Activated CD8-positive, alpha-beta memory T cell treated with anti-CD3 and anti-CD28 coated beads, Interleukin-2, amount 10 ng/mL, durations not matched to agents 7 days and 5 days (primary cell): ENCODE measurements at regions of chr5 and their contacts with region 1.

Region 1: DNA sequence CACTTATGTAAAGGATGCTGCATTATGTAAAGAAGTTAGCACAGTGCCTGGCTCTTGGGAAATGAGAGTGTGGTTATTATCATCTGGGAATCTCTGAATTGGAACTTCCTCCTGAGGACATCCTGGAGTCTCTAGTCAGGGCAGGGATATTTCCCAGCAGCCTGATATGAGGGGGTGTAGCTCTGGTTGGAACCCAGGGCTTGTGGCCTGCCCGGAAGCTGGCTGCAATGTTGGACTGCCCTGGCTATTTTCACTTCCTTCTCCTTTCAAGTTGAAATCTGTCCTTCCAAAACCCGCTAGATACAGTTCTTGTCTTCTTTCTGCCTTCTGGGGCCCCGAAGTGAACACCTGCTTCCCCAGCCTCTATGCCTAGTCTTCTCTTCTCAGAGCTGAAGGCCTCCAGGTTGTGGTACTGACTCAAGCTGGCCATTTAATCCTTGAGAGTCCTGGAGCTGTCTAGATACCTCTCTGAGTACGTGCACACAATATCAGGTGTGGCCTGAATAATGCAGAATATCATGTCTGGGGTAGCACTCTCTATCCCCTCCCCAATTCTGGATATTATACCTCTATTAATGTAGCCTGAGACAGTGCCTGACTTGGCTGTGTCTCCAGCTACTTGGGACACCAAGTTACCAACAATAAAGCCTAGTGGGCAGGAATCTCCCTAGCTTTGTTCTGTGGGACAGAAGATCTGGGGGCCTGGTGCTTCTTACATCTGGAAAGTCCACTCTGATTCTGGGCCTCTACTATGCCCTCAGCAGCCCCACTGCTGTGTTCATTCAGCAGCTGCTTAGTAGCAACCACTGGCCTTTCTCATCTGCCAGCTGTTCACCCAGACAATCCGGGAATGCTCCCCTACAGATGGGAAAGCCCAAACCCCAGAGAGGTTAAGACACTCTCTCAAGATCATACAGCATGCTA is 45.0 kb downstream of the SLC6A7 start:
- DNase-seq: no peak
- ATAC-seq: no peak
- H3K4me3 Mint-ChIP-seq: no peak overlapping the region
- H3K27ac Mint-ChIP-seq: no peak overlapping the region
- H3K4me1 Mint-ChIP-seq: no peaks in the 10 kb centered on the region
- H3K27me3 Mint-ChIP-seq: peaks cover 4% of the 10 kb centered on the region

Region 2: DNA sequence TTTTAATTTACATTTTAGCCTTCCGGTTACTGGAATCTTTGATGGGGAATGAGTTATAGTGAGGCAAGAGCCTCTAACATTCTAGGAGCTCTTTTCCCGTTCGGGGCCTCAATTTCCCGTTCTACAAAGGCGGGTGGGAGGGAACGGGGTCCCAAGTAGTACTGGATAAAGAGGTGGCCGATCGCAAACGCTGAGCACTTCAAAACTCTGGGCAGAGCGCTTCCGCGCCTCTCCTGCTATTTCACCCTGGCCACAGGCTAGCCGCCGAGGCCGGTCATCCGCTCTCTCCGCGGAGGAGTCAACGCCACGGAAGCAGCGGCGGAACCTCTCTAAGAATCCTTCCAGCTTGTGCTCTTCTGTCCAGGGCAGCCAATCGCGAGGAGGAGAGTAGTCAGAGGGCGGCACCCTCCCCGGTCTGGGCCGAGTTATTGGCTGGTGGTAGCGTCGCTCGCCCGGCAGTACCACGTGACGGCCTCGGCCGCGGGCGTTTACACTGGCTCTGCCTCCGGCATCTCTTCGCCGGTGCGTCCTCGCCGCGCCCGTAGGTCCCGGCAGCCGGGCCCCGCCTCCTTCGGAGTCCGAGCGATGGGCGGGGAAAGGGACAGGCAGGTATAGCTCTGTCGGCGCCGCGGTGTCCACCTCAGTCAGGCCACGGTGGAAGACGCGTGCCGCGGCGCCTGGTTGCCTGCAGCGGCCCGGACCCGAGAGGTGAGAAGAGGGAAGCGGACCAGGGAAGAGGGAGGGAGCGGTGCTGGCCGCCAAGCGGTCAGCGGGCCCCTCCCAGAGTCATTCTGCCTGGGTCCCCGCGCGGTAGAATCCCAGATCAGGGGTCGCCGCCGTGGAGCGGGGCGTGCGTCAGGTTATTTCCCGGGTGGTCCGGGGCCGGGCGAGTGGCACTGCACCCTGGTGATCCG is 274.3 kb before region 1 on chr5 and contains the start of gene SLC26A2:
- CTCF ChIA-PET with region 1: no interaction called
- DNase-seq: peak; percentile 98
- ATAC-seq: peak; percentile 99
- H3K4me3 Mint-ChIP-seq: peak within 1 kb of the TSS; percentile 85
- H3K27ac Mint-ChIP-seq: peak within 1 kb of the TSS; percentile 94
- H3K4me1 Mint-ChIP-seq: peaks cover 31% of the 10 kb centered on the region
- H3K27me3 Mint-ChIP-seq: no peaks in the 10 kb centered on the region
- total RNA-seq, gene SLC26A2: 6.2 to 8.4 TPM

Region 3: GRCh38 chr5:150217873-150218692 is 16.8 kb before region 1 on chr5:
- CTCF ChIA-PET with region 1: interaction called, 11 read pairs
- DNase-seq: peak; percentile 90
- ATAC-seq: peak; percentile 98
- H3K4me3 Mint-ChIP-seq: no peak overlapping the region
- H3K27ac Mint-ChIP-seq: no peak overlapping the region
- H3K4me1 Mint-ChIP-seq: no peaks in the 10 kb centered on the region
- H3K27me3 Mint-ChIP-seq: peaks cover 30% of the 10 kb centered on the region